ENCODE measurements at regions of chr9 and their contacts with region 1.

Region 1: GRCh38 chr9:133184962-133185361 is 21.2 kb upstream of the GBGT1 start:
- DNase-seq: peak; percentile 50 to 65
- H3K4me3 ChIP-seq: no peak overlapping the region
- H3K27ac ChIP-seq: no peak overlapping the region
- H3K4me1 ChIP-seq: no peaks in the 10 kb centered on the region
- H3K27me3 ChIP-seq: peaks cover 54% of the 10 kb centered on the region
- CTCF ChIP-seq: peak; percentile 77

Region 2: DNA sequence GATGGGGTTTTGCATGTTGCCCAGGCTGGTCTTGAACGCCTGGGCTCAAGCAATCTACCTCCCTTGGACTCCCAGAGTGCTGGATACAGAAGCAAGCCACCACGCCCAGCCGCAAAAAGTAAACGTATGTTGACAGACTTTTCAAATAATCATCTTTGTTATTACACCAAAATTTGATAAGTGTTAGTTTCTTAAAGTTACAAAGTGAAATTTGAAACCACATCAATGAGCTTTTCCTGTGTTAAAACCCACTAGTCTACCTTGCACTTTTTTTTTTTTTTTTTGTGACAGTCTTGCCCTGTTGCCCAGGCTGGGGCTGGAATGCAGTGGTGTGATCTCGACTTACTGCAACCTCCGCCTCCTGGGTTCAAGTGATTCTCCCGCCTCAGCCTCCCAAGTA is 276.3 kb before region 1 on chr9:
- CTCF ChIA-PET with region 1: no interaction called
- POLR2A ChIA-PET with region 1: no interaction called
- intact Hi-C with region 1: no loop called
- DNase-seq: no peak
- H3K4me3 ChIP-seq: no peak overlapping the region
- H3K27ac ChIP-seq: no peak overlapping the region
- H3K4me1 ChIP-seq: no peaks in the 10 kb centered on the region
- H3K27me3 ChIP-seq: no peaks in the 10 kb centered on the region
- CTCF ChIP-seq: no peak

Region 3: GRCh38 chr9:133023117-133023890 is 161.7 kb before region 1 on chr9:
- CTCF ChIA-PET with region 1: interaction called, 3 read pairs
- POLR2A ChIA-PET with region 1: no interaction called
- intact Hi-C with region 1: loop called (anchors 1 kb)
- DNase-seq: peak in 1 of 2 experiments; percentile 12
- H3K4me3 ChIP-seq: no peak overlapping the region
- H3K27ac ChIP-seq: no peak overlapping the region
- H3K4me1 ChIP-seq: no peaks in the 10 kb centered on the region
- H3K27me3 ChIP-seq: peaks cover 8% of the 10 kb centered on the region
- CTCF ChIP-seq: no peak

Region 4: DNA sequence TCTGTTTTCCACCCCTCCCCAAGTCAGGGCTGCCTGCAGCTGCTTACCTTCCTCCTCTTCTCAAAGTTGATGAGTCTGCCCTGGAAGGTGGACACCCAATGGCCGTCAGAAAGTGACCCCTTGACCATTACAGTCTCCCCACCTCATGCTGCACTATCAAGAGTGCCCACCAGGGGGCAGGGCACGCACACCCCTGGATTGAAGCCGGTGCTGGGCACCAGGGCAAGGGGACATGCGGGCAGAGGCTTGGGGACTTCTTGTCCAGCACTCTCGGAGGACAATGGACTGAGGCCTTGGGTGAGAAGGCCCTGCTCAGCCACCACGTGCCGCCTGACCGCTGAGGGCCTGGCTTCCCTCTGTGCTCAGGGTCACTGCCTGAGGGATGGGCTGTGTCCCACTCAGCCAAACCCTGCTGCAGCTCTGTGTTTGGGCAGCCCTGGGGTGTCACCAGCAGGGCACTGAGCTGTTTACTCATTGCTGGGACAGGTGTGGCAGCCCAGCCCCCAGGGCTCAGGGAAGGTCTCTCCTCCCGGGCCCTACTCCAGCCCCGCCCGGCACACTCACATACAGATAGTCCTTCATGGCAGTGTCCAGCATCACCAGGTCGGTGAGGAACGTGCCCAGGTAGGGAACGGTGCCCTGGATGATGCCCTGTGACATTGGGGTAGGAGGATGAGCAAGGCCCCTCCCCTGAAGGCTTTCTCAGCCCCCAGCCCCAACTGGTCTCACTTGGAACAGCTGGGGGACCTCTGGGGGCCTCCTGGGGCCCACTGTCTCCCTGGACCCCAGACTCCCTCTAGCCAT is 81.6 kb before region 1 on chr9:
- CTCF ChIA-PET with region 1: no interaction called
- POLR2A ChIA-PET with region 1: no interaction called
- intact Hi-C with region 1: loop called (anchors 1 kb)
- DNase-seq: peak; percentile 72 to 87
- H3K4me3 ChIP-seq: no peak overlapping the region
- H3K27ac ChIP-seq: no peak overlapping the region
- H3K4me1 ChIP-seq: peaks cover 12% of the 10 kb centered on the region
- H3K27me3 ChIP-seq: no peaks in the 10 kb centered on the region
- CTCF ChIP-seq: peak; percentile 99

Region 5: GRCh38 chr9:133238851-133239532 is 54.0 kb after region 1 on chr9:
- CTCF ChIA-PET with region 1: interaction called, 10 read pairs
- POLR2A ChIA-PET with region 1: no interaction called
- intact Hi-C with region 1: loop called (anchors 1 kb)
- DNase-seq: peak in 1 of 2 experiments; percentile 83
- H3K4me3 ChIP-seq: no peak overlapping the region
- H3K27ac ChIP-seq: no peak overlapping the region
- H3K4me1 ChIP-seq: no peaks in the 10 kb centered on the region
- H3K27me3 ChIP-seq: no peaks in the 10 kb centered on the region
- CTCF ChIP-seq: peak; percentile 71

Region 6: DNA sequence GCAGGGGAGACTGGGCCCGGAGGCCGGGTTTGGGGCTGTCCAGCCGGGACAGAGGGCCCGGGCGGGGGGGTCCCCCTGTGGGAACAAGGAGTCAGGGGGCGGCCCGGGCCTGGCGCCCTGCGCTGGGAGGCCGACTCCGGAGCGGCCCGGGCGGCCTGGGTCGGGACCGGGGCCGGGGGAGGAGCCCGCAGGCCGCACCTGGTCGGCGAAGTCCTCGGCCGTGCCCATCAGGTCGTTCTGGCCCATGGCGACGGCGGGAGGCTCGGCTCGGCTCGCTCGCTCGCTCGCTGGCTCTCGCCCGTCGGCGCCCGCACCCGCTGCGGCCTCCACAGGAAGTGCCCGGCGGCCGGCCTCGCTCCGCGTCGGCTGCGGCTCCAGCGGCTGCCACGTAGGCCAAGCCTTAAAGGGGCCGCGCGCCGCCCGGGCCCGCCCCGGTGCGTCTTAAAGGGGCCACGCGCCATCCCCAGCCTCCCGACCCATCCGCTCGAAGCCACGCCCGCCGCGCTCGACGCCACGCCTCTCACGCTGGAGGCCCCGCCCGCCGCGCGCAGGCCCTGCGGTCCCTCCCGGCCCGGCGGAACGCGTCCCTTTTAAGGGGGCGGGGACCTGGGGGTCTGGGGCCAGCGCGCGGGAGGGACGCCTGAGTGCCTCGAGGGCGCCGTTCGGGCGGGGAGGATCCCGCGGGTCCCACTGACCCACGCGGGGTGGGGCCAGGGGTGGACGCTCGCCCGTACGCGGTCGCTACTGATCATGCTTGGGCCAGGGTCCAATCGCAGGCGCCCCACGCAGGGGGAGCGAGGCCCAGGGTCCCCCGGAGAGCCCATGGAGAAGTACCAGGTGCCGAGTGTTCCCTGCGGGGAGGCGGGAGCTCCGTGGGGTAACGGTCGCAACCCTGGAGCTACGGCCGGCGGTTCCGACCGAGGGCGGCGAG is 191.0 kb after region 1 on chr9 and contains the starts of genes STKLD1 and SURF4:
- CTCF ChIA-PET with region 1: interaction called, 25 read pairs
- POLR2A ChIA-PET with region 1: interaction called, 7 read pairs
- intact Hi-C with region 1: no loop called
- DNase-seq: peak; percentile 80 to 99
- H3K4me3 ChIP-seq: peak within 1 kb of the TSS; percentile 69
- H3K27ac ChIP-seq: peak within 1 kb of the TSS; percentile 59; the same call in 1 of the 2 replicates
- H3K4me1 ChIP-seq: peaks cover 36% of the 10 kb centered on the region
- H3K27me3 ChIP-seq: no peaks in the 10 kb centered on the region
- CTCF ChIP-seq: no peak
- total RNA-seq, gene STKLD1: 3.1 and 4.8 TPM in 2 replicates
- total RNA-seq, gene SURF4: 199 and 233 TPM in 2 replicates

Region 7: DNA sequence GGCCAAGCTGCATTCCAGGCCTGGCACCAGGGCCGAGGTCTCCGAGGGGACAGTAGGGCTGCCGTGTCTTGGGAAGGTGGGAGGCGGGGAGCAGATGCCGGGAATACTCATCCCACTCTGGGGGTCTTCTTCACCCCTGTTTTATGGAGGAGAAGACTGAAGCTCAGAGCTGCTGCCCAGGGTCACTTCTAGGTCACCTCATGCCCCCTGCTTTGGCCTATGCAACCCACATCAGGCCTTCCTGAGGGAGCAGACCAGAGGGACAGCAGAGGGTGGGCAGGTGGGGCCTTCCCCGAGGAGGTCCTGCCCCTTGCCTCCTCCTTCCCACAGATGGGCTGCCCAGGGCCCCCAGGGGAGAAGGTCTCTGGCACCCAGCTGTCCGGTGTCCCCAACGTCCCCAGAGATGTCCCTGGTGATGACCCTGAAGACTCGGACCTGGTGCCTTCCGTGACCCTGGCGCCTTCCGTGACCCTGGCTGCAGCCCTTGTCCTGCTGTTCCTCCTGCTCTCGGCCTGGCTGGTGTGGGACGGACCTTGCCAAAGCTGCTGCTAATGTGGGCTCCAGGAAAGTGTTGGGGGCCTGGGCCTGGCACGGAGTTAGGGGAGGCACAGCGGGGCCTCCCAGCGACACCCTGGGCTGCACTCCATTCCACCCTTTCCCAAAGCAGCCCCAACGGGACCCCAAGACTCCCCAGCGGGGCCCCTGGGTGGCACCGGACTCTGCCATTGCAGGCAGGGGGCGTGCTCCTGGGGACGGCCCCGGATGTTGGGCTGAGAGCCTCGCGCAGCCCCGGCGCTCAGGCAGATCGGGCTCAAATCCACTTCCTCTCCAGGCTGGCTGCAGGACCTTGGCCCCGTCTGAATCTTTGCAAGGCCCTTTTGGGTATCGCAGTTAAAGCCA is 300.6 kb after region 1 on chr9:
- CTCF ChIA-PET with region 1: interaction called, 7 read pairs
- POLR2A ChIA-PET with region 1: interaction called, 4 read pairs
- intact Hi-C with region 1: loop called (anchors 1 kb)
- DNase-seq: no peak
- H3K4me3 ChIP-seq: peak overlapping the region; percentile 7; the same call in 1 of the 2 replicates
- H3K27ac ChIP-seq: no peak overlapping the region
- H3K4me1 ChIP-seq: peaks cover 38% of the 10 kb centered on the region
- H3K27me3 ChIP-seq: peaks cover 20% of the 10 kb centered on the region
- CTCF ChIP-seq: no peak